AG04450 (cell line): ENCODE measurements at regions of chr4 and their contacts with region 1.

Region 1: DNA sequence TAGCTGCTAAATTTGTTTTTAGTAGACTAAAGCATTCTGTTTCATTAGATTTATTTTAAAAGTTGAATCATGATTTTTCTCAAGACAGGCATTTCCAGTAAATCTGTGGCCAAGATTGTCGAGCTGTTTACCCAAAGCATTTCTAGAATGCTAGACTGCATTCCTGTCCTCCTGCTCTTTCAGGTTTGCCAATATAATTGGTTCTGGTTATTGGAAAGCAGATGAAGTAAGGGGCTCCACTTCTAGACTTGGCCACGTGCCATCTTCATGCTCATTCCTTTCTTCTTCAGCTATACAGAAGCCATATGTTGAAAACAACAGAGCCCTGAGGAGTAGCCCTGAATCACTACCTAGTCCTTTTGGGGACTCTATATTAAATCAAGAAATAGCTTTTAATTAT is 62.5 kb downstream of the PGRMC2 start:
- DNase-seq: peak; percentile 69
- H3K4me3 ChIP-seq: no peak overlapping the region
- H3K27ac ChIP-seq: no peak overlapping the region
- H3K27me3 ChIP-seq: no peaks in the 10 kb centered on the region
- CTCF ChIP-seq: no peak

Region 2: GRCh38 chr4:127957105-127957504 is 268.0 kb before region 1 on chr4:
- CTCF ChIA-PET with region 1: no interaction called
- POLR2A ChIA-PET with region 1: no interaction called
- DNase-seq: no peak
- H3K4me3 ChIP-seq: no peak overlapping the region
- H3K27ac ChIP-seq: no peak overlapping the region
- H3K27me3 ChIP-seq: no peaks in the 10 kb centered on the region
- CTCF ChIP-seq: no peak

Region 3: DNA sequence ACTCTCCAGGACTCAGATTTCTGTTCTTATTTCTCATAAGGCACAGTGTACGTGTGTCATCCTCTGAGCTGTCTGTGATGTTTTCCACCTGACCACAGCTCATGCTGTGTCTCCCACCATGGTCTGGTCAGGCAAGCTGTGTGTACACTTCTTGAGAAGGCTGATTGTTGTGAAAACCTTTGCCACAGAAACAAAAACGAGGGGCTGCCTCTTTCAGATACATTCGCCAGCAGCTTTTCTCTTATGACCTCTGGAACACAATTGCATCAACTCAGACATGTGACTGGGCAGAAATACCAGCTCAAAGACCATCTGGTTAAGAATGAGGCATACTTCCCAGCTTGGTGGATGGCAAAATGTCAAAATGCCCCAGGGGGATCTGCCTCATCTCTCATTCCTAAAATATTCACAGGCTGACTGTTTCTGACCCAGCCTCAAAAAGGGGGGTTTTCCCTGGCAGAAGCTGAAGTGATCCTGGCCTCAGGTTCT is 16.3 kb after region 1 on chr4:
- CTCF ChIA-PET with region 1: interaction called, 4 read pairs
- POLR2A ChIA-PET with region 1: interaction called, 21 read pairs
- DNase-seq: peak; percentile 98
- H3K4me3 ChIP-seq: no peak overlapping the region
- H3K27ac ChIP-seq: peak overlapping the region; percentile 95
- H3K27me3 ChIP-seq: no peaks in the 10 kb centered on the region
- CTCF ChIP-seq: no peak